Naive thymus-derived CD4-positive, alpha-beta T cell (primary cell): ENCODE measurements at regions of chr22 and their contacts with region 1.

Region 1: DNA sequence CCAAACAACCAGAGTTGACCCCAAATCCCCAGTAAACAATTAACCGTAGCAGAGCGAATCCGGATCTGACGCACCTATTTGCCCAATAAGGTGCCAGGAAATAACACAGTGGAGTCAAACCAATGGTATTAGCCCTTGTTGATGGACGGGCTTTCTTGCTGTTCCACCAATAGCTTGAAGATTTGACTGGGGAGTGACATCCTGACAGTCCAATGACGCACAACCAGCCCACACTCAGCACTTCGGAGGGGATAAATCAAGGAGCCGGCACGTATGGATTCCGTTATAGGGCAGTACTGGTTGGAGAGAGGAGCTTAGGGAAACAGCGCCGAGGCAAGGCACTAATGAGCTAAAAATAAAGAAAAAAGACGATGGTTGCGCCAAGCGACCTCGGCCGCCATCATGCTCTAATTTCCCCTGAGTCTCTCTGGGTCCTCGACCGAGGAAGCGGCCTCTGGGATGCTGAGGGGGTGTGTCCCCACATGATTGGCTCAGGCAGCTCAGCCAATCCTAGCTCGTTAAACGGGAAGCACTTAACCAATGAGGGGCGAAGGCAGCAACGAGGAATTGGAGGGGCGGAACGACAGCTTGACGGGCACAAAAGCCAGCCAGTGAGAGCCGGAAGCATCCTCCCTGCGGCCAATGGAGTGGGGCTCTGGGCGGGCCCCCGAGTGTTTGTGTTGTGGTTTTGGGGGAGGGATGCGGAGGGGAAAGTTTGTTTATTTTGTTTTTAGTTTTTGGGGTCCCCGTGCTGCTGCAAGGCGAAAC is 49.5 kb downstream of the FAM83F start:
- DNase-seq: peak; percentile 87 to 100 (median 99)
- ATAC-seq: peak; percentile 92
- H3K4me3 ChIP-seq: peak overlapping the region; percentile 81
- H3K4me3 Mint-ChIP-seq: peak overlapping the region; percentile 94 to 99 (median 98)
- H3K27ac ChIP-seq: peak overlapping the region; percentile 88
- H3K27ac Mint-ChIP-seq: peak overlapping the region; percentile 98 to 100 (median 99)
- H3K4me1 ChIP-seq: peaks cover 15 to 29% of the 10 kb centered on the region in 2 donors
- H3K4me1 Mint-ChIP-seq: peaks cover 23 to 53% (median 40%) of the 10 kb centered on the region in 7 donors
- H3K27me3 ChIP-seq: no peaks in the 10 kb centered on the region
- H3K27me3 Mint-ChIP-seq: peaks cover 3 to 17% (median 7%) of the 10 kb centered on the region in 5 donors

Region 2: DNA sequence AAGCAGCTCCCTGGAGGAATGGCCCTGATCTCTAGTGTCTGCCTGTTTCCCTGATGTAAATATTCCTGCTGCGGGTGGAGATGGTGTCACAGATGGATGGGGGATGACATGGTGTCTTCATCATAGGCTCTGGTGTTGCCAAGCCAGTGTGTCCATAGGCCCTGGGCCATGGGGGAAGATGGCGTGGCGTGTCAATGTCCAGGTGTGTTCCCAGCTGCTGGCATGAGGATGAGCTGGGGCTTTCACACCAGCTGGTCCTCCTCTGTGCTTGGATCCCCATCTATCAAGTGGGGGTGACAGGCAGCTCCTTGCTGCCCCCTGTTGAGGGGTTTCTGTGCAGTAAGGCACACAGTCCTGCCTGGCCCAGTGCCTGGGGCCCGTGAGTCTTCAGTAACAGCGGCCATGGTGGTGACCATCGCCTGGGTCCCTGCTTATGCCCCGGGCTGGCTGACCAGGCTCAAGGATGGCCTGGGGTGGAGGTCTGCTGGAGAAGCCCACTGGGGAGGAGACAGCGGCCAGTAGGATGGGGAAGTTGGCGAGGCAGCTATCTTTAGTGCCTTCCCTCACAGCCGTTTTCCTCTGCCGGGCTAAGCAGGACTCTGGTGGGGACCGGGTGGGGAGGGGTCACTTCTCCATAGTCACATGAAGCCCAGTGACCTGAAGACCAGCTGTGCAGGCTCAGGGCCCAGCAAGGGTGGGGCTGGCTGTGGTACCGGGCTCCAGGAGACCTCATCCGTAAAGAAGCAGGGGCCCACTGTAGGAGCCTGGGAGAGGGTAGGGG is 737.5 kb before region 1 on chr22:
- CTCF ChIA-PET with region 1: no interaction called
- POLR2A ChIA-PET with region 1: no interaction called
- intact Hi-C with region 1: no loop called
- DNase-seq: peak in 5 of 9 donors; percentile 31 to 60 (median 42)
- ATAC-seq: peak; percentile 51
- H3K4me3 ChIP-seq: no peak overlapping the region
- H3K4me3 Mint-ChIP-seq: no peak overlapping the region
- H3K27ac ChIP-seq: no peak overlapping the region
- H3K27ac Mint-ChIP-seq: peak overlapping the region in 3 of 9 donors; percentile 32 to 37 (median 33)
- H3K4me1 ChIP-seq: peaks cover 0 to 5% of the 10 kb centered on the region in 2 donors
- H3K4me1 Mint-ChIP-seq: peaks cover 0 to 13% (median 7%) of the 10 kb centered on the region in 7 donors
- H3K27me3 ChIP-seq: no peaks in the 10 kb centered on the region
- H3K27me3 Mint-ChIP-seq: no peaks in the 10 kb centered on the region

Region 3: DNA sequence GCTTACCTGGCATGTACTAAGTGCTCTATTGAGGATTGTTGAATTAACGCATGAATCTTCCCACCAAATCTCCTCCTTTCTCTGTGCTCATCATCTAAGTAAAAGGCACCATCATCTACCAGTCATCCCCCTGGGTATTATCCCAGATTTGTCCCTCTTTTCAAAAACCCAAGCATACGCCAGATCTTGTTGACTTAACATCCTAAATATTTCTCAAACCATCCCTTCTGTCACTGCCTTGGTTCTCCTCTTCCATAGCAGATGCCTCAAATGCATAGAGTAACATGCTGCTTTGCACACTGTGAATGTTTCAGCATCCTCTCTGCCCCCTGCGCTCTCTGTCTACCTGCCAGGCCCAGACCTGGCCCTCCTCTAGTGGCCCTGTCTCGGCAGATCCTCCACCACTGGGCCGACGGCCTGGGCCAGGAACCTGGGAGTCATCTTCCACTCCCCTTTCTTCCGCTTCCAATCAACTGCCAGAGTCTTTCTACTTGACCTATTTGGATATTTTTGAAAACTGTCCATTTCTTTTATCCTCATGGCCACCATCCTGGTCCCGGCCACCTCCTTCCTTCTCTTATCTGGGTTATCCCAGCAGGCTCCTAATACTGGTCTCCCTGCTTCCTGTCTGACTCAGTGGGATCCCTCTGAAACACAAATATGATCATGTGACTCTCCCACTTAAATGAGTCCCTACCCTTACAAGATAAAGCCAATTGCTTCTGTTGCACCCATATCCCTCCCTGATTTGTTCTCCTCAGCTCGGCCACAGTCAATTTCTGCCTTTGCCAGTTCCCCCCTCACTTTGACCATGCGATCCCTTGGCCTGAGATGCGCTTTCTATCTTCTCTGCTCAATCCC is 648.1 kb before region 1 on chr22:
- CTCF ChIA-PET with region 1: no interaction called
- POLR2A ChIA-PET with region 1: no interaction called
- intact Hi-C with region 1: loop called (anchors 1 to 5 kb)
- DNase-seq: no peak
- ATAC-seq: no peak
- H3K4me3 ChIP-seq: no peak overlapping the region
- H3K4me3 Mint-ChIP-seq: peak overlapping the region in 1 of 10 donors; percentile 34
- H3K27ac ChIP-seq: no peak overlapping the region
- H3K27ac Mint-ChIP-seq: peak overlapping the region in 2 of 9 donors; percentile 5 to 6
- H3K4me1 ChIP-seq: peaks cover 6 to 9% of the 10 kb centered on the region in 2 donors
- H3K4me1 Mint-ChIP-seq: peaks cover 5 to 19% (median 11%) of the 10 kb centered on the region in 7 donors
- H3K27me3 ChIP-seq: no peaks in the 10 kb centered on the region
- H3K27me3 Mint-ChIP-seq: peaks cover 0 to 2% (median 0%) of the 10 kb centered on the region in 5 donors

Region 4: GRCh38 chr22:39520054-39520891 is 524.0 kb before region 1 on chr22 and contains the start of gene ATF4:
- CTCF ChIA-PET with region 1: no interaction called
- POLR2A ChIA-PET with region 1: interaction called, 19 read pairs
- intact Hi-C with region 1: loop called in 1 of 2 experiments (anchors 1 kb)
- DNase-seq: peak; percentile 88 to 98 (median 96)
- ATAC-seq: peak; percentile 92
- H3K4me3 ChIP-seq: peak within 1 kb of the TSS; percentile 96
- H3K4me3 Mint-ChIP-seq: peak within 1 kb of the TSS; percentile 83 to 99 (median 96)
- H3K27ac ChIP-seq: peak within 1 kb of the TSS; percentile 84
- H3K27ac Mint-ChIP-seq: peak within 1 kb of the TSS; percentile 94 to 100 (median 97)
- H3K4me1 ChIP-seq: peaks cover 27 to 39% of the 10 kb centered on the region in 2 donors
- H3K4me1 Mint-ChIP-seq: peaks cover 29 to 61% (median 48%) of the 10 kb centered on the region in 7 donors
- H3K27me3 ChIP-seq: no peaks in the 10 kb centered on the region
- H3K27me3 Mint-ChIP-seq: peaks cover 0 to 4% (median 0%) of the 10 kb centered on the region in 5 donors
- total RNA-seq, gene ATF4: 235 to 293 (median 244) TPM

Region 5: DNA sequence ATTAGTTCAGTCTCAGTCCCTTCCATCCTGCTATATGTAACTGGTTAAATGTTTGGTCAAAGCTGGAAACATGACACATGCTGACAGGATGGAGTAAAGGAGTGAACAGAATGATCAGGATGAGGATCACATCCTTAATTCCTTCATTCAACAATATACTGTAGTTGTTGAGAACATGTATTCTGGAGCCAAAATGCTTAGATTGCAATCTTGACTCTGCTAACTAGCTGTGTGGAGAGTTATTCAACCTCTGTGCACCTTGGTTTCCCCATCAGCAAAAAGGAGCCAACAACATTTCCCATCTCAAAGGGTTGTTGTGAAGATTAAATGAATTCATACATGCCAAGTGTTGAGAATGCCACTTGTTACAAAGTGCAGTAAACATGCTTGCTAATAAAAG is 163.6 kb before region 1 on chr22:
- CTCF ChIA-PET with region 1: no interaction called
- POLR2A ChIA-PET with region 1: no interaction called
- intact Hi-C with region 1: no loop called
- DNase-seq: no peak
- ATAC-seq: no peak
- H3K4me3 ChIP-seq: no peak overlapping the region
- H3K4me3 Mint-ChIP-seq: no peak overlapping the region
- H3K27ac ChIP-seq: no peak overlapping the region
- H3K27ac Mint-ChIP-seq: no peak overlapping the region
- H3K4me1 ChIP-seq: no peaks in the 10 kb centered on the region
- H3K4me1 Mint-ChIP-seq: peaks cover 0 to 8% (median 0%) of the 10 kb centered on the region in 7 donors
- H3K27me3 ChIP-seq: no peaks in the 10 kb centered on the region
- H3K27me3 Mint-ChIP-seq: peaks cover 0 to 10% (median 0%) of the 10 kb centered on the region in 5 donors

Region 6: GRCh38 chr22:39997939-39998338 is 46.3 kb before region 1 on chr22:
- CTCF ChIA-PET with region 1: no interaction called
- POLR2A ChIA-PET with region 1: no interaction called
- intact Hi-C with region 1: no loop called
- DNase-seq: no peak
- ATAC-seq: no peak
- H3K4me3 ChIP-seq: no peak overlapping the region
- H3K4me3 Mint-ChIP-seq: no peak overlapping the region
- H3K27ac ChIP-seq: no peak overlapping the region
- H3K27ac Mint-ChIP-seq: peak overlapping the region in 1 of 9 donors; percentile 8
- H3K4me1 ChIP-seq: peaks cover 0 to 6% of the 10 kb centered on the region in 2 donors
- H3K4me1 Mint-ChIP-seq: peaks cover 0 to 15% (median 9%) of the 10 kb centered on the region in 7 donors
- H3K27me3 ChIP-seq: peaks cover 0 to 6% of the 10 kb centered on the region in 2 donors
- H3K27me3 Mint-ChIP-seq: peaks cover 0 to 48% (median 17%) of the 10 kb centered on the region in 5 donors

Region 7: DNA sequence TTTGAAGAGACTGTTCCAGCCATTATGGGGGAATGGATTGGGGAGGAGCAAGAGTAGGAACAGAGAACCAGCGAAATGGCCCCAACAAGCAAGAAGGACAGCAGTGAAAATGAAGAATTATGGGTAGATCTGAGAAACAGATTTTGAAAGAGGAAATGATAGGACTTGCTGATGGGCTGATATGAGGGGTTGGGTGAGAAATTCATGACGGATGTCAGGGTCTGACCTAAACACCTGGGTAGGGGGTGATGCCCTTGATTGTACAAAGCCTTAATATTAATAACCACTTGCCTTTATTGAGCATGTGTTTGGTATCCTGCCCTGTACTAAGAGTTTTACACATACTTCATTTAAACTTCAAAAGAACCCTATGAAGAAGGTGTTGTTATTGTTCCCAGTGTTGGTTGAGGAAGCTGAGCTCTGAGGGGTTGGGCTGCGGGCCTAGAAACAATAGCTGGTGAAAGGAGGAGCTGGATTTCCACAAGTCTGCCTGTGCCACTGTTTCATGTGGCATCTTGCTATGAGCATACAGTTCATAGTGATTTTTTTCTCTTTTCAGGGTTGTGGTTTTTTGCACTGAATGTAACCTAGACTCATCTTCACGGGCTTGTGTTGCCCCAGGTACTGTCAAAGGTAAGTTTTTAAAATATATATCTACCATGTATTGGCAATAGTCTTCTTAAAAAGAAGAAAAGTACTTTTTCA is 72.4 kb after region 1 on chr22:
- CTCF ChIA-PET with region 1: interaction called, 4 read pairs
- POLR2A ChIA-PET with region 1: interaction called, 12 read pairs
- intact Hi-C with region 1: loop called in 1 of 2 experiments (anchors 1 kb)
- DNase-seq: peak in 8 of 9 donors; percentile 26 to 88 (median 84)
- ATAC-seq: peak; percentile 95
- H3K4me3 ChIP-seq: peak overlapping the region; percentile 6
- H3K4me3 Mint-ChIP-seq: peak overlapping the region; percentile 26 to 89 (median 78)
- H3K27ac ChIP-seq: peak overlapping the region; percentile 48
- H3K27ac Mint-ChIP-seq: peak overlapping the region; percentile 79 to 94 (median 87)
- H3K4me1 ChIP-seq: peaks cover 24 to 64% of the 10 kb centered on the region in 2 donors
- H3K4me1 Mint-ChIP-seq: peaks cover 31 to 95% (median 92%) of the 10 kb centered on the region in 7 donors
- H3K27me3 ChIP-seq: no peaks in the 10 kb centered on the region
- H3K27me3 Mint-ChIP-seq: no peaks in the 10 kb centered on the region

Region 8: GRCh38 chr22:40203572-40203971 is 159.3 kb after region 1 on chr22:
- CTCF ChIA-PET with region 1: no interaction called
- POLR2A ChIA-PET with region 1: interaction called, 10 read pairs
- intact Hi-C with region 1: no loop called
- DNase-seq: peak in 7 of 9 donors; percentile 46 to 72 (median 60)
- ATAC-seq: peak; percentile 93
- H3K4me3 ChIP-seq: peak overlapping the region; percentile 5
- H3K4me3 Mint-ChIP-seq: peak overlapping the region; percentile 60 to 73 (median 66)
- H3K27ac ChIP-seq: peak overlapping the region; percentile 54
- H3K27ac Mint-ChIP-seq: peak overlapping the region; percentile 74 to 95 (median 85)
- H3K4me1 ChIP-seq: peaks cover 24 to 49% of the 10 kb centered on the region in 2 donors
- H3K4me1 Mint-ChIP-seq: peaks cover 50 to 88% (median 79%) of the 10 kb centered on the region in 7 donors
- H3K27me3 ChIP-seq: no peaks in the 10 kb centered on the region
- H3K27me3 Mint-ChIP-seq: no peaks in the 10 kb centered on the region

Region 9: DNA sequence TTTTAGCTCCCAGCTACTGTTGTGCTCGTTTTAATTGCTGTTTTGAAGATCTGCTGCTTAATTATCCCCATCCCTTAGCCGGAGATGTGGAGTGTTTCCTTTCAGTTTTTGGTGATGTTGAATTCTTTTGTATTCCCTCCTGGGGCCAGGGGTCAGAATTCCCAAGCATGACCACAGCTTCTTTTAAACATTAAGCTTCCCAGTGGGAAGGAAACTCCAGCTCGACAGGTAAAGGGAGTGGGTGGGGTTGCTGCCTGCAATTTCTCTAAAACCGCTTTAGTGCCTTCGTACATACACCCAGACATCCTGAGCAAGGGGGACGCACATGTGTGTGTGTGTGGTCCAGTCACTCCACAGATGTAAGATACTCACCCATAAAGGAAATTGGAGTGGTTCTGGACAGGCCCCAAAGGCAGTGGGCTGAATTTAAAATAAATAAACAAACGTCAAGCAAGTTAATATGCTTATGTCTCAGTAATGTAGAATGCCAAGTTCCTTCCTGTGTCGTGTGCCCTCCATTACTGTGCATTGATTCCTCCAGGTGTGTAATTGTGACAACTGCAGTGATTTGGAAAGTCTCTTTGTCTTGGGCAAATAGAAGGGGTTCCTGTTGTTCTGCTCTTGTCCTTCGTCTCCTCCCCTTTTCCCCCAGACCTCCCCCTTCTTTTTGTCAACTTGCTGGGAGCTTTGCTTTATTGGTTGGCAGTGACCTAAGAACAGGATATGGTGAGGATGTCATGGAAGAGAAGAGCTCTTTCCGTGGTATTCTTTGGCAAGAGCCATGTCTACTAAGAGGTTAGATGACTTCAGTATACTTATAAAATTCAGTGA is 282.8 kb after region 1 on chr22:
- CTCF ChIA-PET with region 1: no interaction called
- POLR2A ChIA-PET with region 1: interaction called, 22 read pairs
- intact Hi-C with region 1: no loop called
- DNase-seq: peak in 6 of 9 donors; percentile 37 to 79 (median 53)
- ATAC-seq: no peak
- H3K4me3 ChIP-seq: no peak overlapping the region
- H3K4me3 Mint-ChIP-seq: peak overlapping the region; percentile 31 to 78 (median 58)
- H3K27ac ChIP-seq: peak overlapping the region; percentile 59
- H3K27ac Mint-ChIP-seq: peak overlapping the region; percentile 53 to 99 (median 95)
- H3K4me1 ChIP-seq: peaks cover 62 to 96% of the 10 kb centered on the region in 2 donors
- H3K4me1 Mint-ChIP-seq: peaks cover 51 to 100% (median 97%) of the 10 kb centered on the region in 7 donors
- H3K27me3 ChIP-seq: no peaks in the 10 kb centered on the region
- H3K27me3 Mint-ChIP-seq: no peaks in the 10 kb centered on the region